ENCODE measurements at regions of chr4 and their contacts with region 1.

Region 1: DNA sequence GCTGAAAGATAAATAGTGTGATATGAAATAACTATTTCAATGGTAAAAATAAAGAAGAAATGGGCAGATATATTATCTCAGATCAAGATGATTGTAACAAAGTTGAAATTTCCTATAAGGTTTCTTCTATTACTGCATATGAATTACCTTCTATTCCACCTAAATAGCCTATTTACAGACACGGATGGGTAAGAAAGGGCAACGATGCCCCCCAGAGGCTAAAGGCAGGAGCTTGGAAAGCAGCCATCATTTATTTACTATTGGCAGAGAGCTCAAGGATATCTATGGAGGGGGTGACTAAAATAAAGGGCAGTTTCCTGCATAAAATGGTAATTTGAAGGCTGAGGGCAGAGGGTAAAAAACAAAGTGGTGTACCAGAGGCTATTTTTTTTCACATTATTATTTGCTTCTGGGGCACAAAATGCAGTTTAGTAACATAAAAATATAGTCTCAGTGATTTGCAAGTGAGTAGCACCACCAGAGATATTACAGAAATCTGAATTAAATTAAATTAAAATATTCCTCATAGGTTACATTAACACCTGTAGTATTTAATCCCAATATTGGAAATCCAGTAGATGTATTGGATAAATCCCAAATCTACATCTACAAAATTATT is 123.1 kb downstream of the BTC start:
- DNase-seq: no peak
- H3K4me3 ChIP-seq: no peak overlapping the region
- H3K27ac ChIP-seq: no peak overlapping the region
- H3K4me1 ChIP-seq: no peaks in the 10 kb centered on the region
- H3K27me3 ChIP-seq: no peaks in the 10 kb centered on the region
- CTCF ChIP-seq: peak in 2 of 3 experiments; percentile 23 to 47

Region 2: GRCh38 chr4:74173321-74173720 is 497.9 kb before region 1 on chr4:
- intact Hi-C with region 1: no loop called
- DNase-seq: no peak
- H3K4me3 ChIP-seq: no peak overlapping the region
- H3K27ac ChIP-seq: no peak overlapping the region
- H3K4me1 ChIP-seq: no peaks in the 10 kb centered on the region
- H3K27me3 ChIP-seq: no peaks in the 10 kb centered on the region
- CTCF ChIP-seq: no peak

Region 3: GRCh38 chr4:74376888-74377483 is 294.2 kb before region 1 on chr4:
- intact Hi-C with region 1: loop called (anchors 2 kb)
- DNase-seq: no peak
- H3K4me3 ChIP-seq: no peak overlapping the region
- H3K27ac ChIP-seq: no peak overlapping the region
- H3K4me1 ChIP-seq: no peaks in the 10 kb centered on the region
- H3K27me3 ChIP-seq: no peaks in the 10 kb centered on the region
- CTCF ChIP-seq: peak; percentile 42 to 71 (median 45)

Region 4: GRCh38 chr4:74531963-74532794 is 139.0 kb before region 1 on chr4:
- intact Hi-C with region 1: loop called (anchors 5 kb)
- DNase-seq: no peak
- H3K4me3 ChIP-seq: no peak overlapping the region
- H3K27ac ChIP-seq: no peak overlapping the region
- H3K4me1 ChIP-seq: no peaks in the 10 kb centered on the region
- H3K27me3 ChIP-seq: no peaks in the 10 kb centered on the region
- CTCF ChIP-seq: peak; percentile 19 to 57 (median 55)

Region 5: DNA sequence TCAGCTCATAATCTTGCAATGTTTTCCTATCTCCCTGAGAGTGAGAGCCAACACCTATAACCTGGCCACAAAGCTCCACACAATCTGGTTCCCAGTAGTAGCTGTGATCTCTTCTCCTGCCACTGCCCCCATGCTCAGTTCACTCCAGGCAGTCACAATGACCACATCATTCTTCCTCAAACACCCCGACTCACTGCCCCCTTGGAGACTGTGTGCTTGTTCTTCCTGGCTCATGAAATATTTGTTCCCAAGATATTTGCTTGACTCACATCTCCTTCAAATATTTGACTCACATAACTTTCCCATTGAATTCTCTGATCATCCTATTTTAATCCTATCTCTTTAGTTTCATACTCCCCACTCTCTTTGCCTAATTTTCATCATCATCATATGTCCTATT is 52.5 kb before region 1 on chr4:
- intact Hi-C with region 1: no loop called
- DNase-seq: no peak
- H3K4me3 ChIP-seq: no peak overlapping the region
- H3K27ac ChIP-seq: no peak overlapping the region
- H3K4me1 ChIP-seq: no peaks in the 10 kb centered on the region
- H3K27me3 ChIP-seq: no peaks in the 10 kb centered on the region
- CTCF ChIP-seq: no peak

Region 6: GRCh38 chr4:74654230-74654681 is 16.9 kb before region 1 on chr4:
- intact Hi-C with region 1: no loop called
- DNase-seq: no peak
- H3K4me3 ChIP-seq: no peak overlapping the region
- H3K27ac ChIP-seq: no peak overlapping the region
- H3K4me1 ChIP-seq: no peaks in the 10 kb centered on the region
- H3K27me3 ChIP-seq: no peaks in the 10 kb centered on the region
- CTCF ChIP-seq: no peak

Measured in ascending aorta (tissue), 2 donors.